CD14-positive monocyte (primary cell): ENCODE measurements at regions of chr19 and their contacts with region 1.

Region 1: GRCh38 chr19:51660975-51661600 is 14.5 kb upstream of the SIGLEC14 start:
- DNase-seq: peak; percentile 72 to 80 (median 76)
- H3K4me3 ChIP-seq: no peak overlapping the region
- H3K4me3 Mint-ChIP-seq: peak overlapping the region in 1 of 2 donors; percentile 67
- H3K27ac ChIP-seq: no peak overlapping the region
- H3K27ac Mint-ChIP-seq: no peak overlapping the region
- H3K4me1 ChIP-seq: peaks cover 15 to 22% of the 10 kb centered on the region in 2 donors
- H3K4me1 Mint-ChIP-seq: peaks cover 18% of the 10 kb centered on the region
- H3K27me3 ChIP-seq: peaks cover 34 to 45% of the 10 kb centered on the region in 2 donors
- H3K27me3 Mint-ChIP-seq: peaks cover 30 to 40% (median 38%) of the 10 kb centered on the region in 3 donors
- CTCF ChIP-seq: peak; percentile 70

Region 2: GRCh38 chr19:51393959-51394836 is 266.9 kb before region 1 on chr19:
- intact Hi-C with region 1: loop called in 1 of 2 experiments (anchors 10 kb)
- DNase-seq: peak; percentile 96 to 98 (median 98)
- H3K4me3 ChIP-seq: peak overlapping the region; percentile 17 to 74 (median 31)
- H3K4me3 Mint-ChIP-seq: peak overlapping the region; percentile 69 to 82
- H3K27ac ChIP-seq: peak overlapping the region; percentile 76 to 79
- H3K27ac Mint-ChIP-seq: peak overlapping the region; percentile 88 to 97 (median 94)
- H3K4me1 ChIP-seq: peaks cover 35 to 40% of the 10 kb centered on the region in 2 donors
- H3K4me1 Mint-ChIP-seq: peaks cover 43% of the 10 kb centered on the region
- H3K27me3 ChIP-seq: no peaks in the 10 kb centered on the region
- H3K27me3 Mint-ChIP-seq: peaks cover 0 to 4% (median 1%) of the 10 kb centered on the region in 3 donors
- CTCF ChIP-seq: peak; percentile 32

Region 3: DNA sequence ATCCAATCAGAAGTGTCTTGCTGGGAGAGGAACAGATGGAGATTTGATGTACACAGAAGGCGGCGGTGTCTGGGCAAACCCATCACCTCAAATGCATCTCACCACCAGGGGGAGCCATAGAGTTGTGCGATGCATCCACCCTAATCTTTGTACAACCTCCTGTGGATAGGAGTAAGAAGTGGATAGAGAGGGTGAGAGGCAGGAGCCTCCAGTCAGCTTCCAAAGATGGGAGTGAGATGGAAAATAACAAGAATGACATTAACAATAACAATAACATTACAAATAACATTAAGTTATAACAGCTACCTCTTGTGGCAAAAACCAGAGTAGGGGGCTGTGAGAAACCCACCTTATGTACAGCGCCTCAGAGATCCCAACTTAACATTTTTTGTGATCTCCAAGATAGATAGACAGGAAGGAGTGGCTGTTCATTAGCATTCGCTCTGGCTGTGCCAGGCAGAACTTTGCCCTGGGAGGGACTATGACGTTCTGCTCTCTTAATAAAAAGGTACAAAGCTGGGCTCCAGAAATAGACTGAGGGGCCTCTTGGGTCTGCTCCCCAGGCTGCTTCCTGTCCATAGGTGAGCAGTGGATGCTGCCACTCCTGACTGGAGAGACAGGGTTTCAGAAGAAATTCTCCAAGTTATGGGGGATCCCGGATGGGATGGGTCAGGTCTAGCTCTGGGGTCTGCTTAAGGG is 187.9 kb before region 1 on chr19:
- intact Hi-C with region 1: loop called (anchors 2 to 5 kb)
- DNase-seq: peak; percentile 76 to 80 (median 78)
- H3K4me3 ChIP-seq: no peak overlapping the region
- H3K4me3 Mint-ChIP-seq: no peak overlapping the region
- H3K27ac ChIP-seq: no peak overlapping the region
- H3K27ac Mint-ChIP-seq: no peak overlapping the region
- H3K4me1 ChIP-seq: peaks cover 5 to 6% of the 10 kb centered on the region in 2 donors
- H3K4me1 Mint-ChIP-seq: peaks cover 10% of the 10 kb centered on the region
- H3K27me3 ChIP-seq: no peaks in the 10 kb centered on the region
- H3K27me3 Mint-ChIP-seq: peaks cover 14 to 25% (median 17%) of the 10 kb centered on the region in 3 donors
- CTCF ChIP-seq: peak; percentile 94

Region 4: GRCh38 chr19:51607920-51608562 is 53.0 kb before region 1 on chr19:
- intact Hi-C with region 1: loop called (anchors 2 kb)
- DNase-seq: peak; percentile 79 to 86 (median 84)
- H3K4me3 ChIP-seq: no peak overlapping the region
- H3K4me3 Mint-ChIP-seq: no peak overlapping the region
- H3K27ac ChIP-seq: no peak overlapping the region
- H3K27ac Mint-ChIP-seq: no peak overlapping the region
- H3K4me1 ChIP-seq: peaks cover 0 to 10% of the 10 kb centered on the region in 2 donors
- H3K4me1 Mint-ChIP-seq: peaks cover 20% of the 10 kb centered on the region
- H3K27me3 ChIP-seq: peaks cover 2 to 17% of the 10 kb centered on the region in 2 donors
- H3K27me3 Mint-ChIP-seq: peaks cover 7 to 16% (median 11%) of the 10 kb centered on the region in 3 donors
- CTCF ChIP-seq: peak; percentile 91

Region 5: DNA sequence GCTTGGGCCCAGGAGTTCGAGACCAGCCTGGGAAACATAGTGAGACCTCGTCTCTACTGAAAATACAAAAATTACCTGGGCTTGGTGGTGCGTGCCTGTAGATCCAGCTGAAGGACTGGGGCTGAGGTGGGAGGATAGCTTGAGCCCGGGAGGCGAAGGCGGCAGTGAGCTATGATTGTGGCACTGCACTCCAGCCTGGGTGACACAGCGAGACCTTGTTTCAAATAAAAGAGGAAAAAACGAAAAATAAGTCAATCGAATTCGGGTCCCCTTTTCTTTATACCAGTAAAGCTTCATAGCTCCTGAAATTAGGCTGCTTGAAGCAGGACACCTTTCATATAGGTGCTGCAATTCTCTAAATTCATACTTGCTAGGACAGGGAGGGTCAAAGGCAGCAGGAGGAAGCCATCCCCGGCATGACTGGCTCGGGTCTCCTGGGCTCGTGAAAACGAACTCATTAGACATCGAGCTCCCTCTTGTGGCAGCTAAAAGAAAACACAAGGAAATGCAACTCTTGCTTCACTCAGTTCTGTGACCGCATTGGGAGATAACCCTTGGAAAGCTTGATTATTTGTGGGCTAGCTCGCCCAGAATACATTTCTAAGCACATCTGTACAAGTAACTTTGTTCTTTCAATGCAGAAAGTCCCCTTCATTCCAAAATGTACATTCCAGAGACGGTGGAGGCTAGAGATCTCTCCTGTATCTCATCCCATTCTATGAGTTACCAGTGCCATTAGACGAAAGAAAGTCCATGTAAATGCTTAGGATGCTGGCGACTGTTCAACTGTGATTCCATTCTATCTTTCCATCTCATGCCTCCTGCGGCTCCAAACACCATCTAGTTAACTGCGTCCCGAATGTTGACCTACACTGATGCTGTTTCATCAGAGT is 116.7 kb after region 1 on chr19:
- intact Hi-C with region 1: loop called (anchors 5 kb)
- DNase-seq: peak; percentile 81 to 93 (median 91)
- H3K4me3 ChIP-seq: no peak overlapping the region
- H3K4me3 Mint-ChIP-seq: peak overlapping the region in 1 of 2 donors; percentile 39
- H3K27ac ChIP-seq: no peak overlapping the region
- H3K27ac Mint-ChIP-seq: peak overlapping the region; percentile 10 to 86 (median 70)
- H3K4me1 ChIP-seq: peaks cover 55 to 70% of the 10 kb centered on the region in 2 donors
- H3K4me1 Mint-ChIP-seq: peaks cover 66% of the 10 kb centered on the region
- H3K27me3 ChIP-seq: no peaks in the 10 kb centered on the region
- H3K27me3 Mint-ChIP-seq: peaks cover 3% of the 10 kb centered on the region in 3 donors
- CTCF ChIP-seq: peak; percentile 84

Region 6: GRCh38 chr19:51824281-51825005 is 163.4 kb after region 1 on chr19:
- intact Hi-C with region 1: loop called in 1 of 2 experiments (anchors 5 kb)
- DNase-seq: peak; percentile 91 to 96 (median 92)
- H3K4me3 ChIP-seq: peak overlapping the region in 1 of 3 experiments; percentile 41
- H3K4me3 Mint-ChIP-seq: peak overlapping the region; percentile 2 to 56
- H3K27ac ChIP-seq: peak overlapping the region; percentile 88 to 99
- H3K27ac Mint-ChIP-seq: peak overlapping the region; percentile 97 to 99 (median 98)
- H3K4me1 ChIP-seq: peaks cover 77 to 78% of the 10 kb centered on the region in 2 donors
- H3K4me1 Mint-ChIP-seq: peaks cover 80% of the 10 kb centered on the region
- H3K27me3 ChIP-seq: no peaks in the 10 kb centered on the region
- H3K27me3 Mint-ChIP-seq: peaks cover 0 to 6% (median 0%) of the 10 kb centered on the region in 3 donors
- CTCF ChIP-seq: no peak

Region 7: GRCh38 chr19:51830274-51830673 is 169.2 kb after region 1 on chr19:
- intact Hi-C with region 1: loop called in 1 of 2 experiments (anchors 5 kb)
- DNase-seq: peak; percentile 85 to 92 (median 92)
- H3K4me3 ChIP-seq: peak overlapping the region in 1 of 3 experiments; percentile 33
- H3K4me3 Mint-ChIP-seq: peak overlapping the region in 1 of 2 donors; percentile 72
- H3K27ac ChIP-seq: peak overlapping the region in 1 of 2 donors; percentile 79
- H3K27ac Mint-ChIP-seq: peak overlapping the region; percentile 83 to 94 (median 89)
- H3K4me1 ChIP-seq: peaks cover 24 to 25% of the 10 kb centered on the region in 2 donors
- H3K4me1 Mint-ChIP-seq: peaks cover 30% of the 10 kb centered on the region
- H3K27me3 ChIP-seq: peaks cover 4% of the 10 kb centered on the region in 2 donors
- H3K27me3 Mint-ChIP-seq: peaks cover 2 to 12% (median 3%) of the 10 kb centered on the region in 3 donors
- CTCF ChIP-seq: peak; percentile 87